ENCODE measurements at regions of chr12 and their contacts with region 1.

Region 1: GRCh38 chr12:124567661-124568373 is 405 bp upstream of the NCOR2 start:
- DNase-seq: peak; percentile 70 to 85 (median 82)
- ATAC-seq: peak; percentile 87
- H3K4me3 ChIP-seq: peak overlapping the region; percentile 72
- H3K4me3 Mint-ChIP-seq: peak overlapping the region; percentile 78 to 92 (median 86)
- H3K27ac ChIP-seq: peak overlapping the region; percentile 58
- H3K27ac Mint-ChIP-seq: peak overlapping the region; percentile 59 to 88 (median 81)
- H3K4me1 ChIP-seq: peaks cover 6 to 15% of the 10 kb centered on the region in 2 donors
- H3K4me1 Mint-ChIP-seq: peaks cover 0 to 47% (median 25%) of the 10 kb centered on the region in 7 donors
- H3K27me3 ChIP-seq: no peaks in the 10 kb centered on the region
- H3K27me3 Mint-ChIP-seq: no peaks in the 10 kb centered on the region

Region 2: DNA sequence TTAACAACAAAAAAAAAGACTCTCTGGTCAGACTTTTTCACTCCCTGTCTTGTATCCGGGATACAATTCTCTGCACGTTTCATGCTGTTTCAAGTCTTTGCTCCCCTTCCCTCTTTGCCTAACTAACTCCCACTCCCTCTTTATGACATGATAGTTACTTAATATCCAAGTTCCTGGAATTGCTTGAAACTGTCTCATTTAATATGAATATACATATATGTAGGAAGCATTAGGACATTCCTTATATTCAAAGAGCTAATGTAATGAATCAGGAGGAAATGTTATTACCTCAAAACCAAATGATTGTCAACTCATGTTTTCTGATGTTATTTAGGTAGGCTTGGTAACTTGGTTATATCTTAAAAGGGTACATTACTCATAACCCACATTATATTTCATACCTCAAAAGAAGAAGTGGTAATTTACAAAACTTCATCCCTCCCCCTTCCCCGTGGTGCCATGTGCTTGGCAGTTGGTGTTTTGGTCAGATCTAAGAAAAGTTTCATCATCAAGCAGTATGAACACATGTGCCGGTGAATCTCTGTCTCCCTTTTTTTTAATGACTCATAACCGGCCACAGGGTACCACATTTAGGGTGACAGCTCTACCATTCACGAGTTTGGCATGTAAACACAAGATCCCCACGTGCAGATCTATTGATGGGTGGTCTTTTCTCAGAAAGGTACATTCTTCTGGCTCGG is 1921.2 kb before region 1 on chr12:
- CTCF ChIA-PET with region 1: no interaction called
- POLR2A ChIA-PET with region 1: no interaction called
- intact Hi-C with region 1: no loop called
- DNase-seq: peak in 1 of 9 donors; percentile 41
- ATAC-seq: peak; percentile 89
- H3K4me3 ChIP-seq: no peak overlapping the region
- H3K4me3 Mint-ChIP-seq: peak overlapping the region in 2 of 10 donors; percentile 41 to 46
- H3K27ac ChIP-seq: no peak overlapping the region
- H3K27ac Mint-ChIP-seq: peak overlapping the region in 2 of 9 donors; percentile 0 to 24
- H3K4me1 ChIP-seq: no peaks in the 10 kb centered on the region
- H3K4me1 Mint-ChIP-seq: peaks cover 0 to 11% (median 8%) of the 10 kb centered on the region in 7 donors
- H3K27me3 ChIP-seq: no peaks in the 10 kb centered on the region
- H3K27me3 Mint-ChIP-seq: peaks cover 0 to 8% (median 7%) of the 10 kb centered on the region in 5 donors

Region 3: DNA sequence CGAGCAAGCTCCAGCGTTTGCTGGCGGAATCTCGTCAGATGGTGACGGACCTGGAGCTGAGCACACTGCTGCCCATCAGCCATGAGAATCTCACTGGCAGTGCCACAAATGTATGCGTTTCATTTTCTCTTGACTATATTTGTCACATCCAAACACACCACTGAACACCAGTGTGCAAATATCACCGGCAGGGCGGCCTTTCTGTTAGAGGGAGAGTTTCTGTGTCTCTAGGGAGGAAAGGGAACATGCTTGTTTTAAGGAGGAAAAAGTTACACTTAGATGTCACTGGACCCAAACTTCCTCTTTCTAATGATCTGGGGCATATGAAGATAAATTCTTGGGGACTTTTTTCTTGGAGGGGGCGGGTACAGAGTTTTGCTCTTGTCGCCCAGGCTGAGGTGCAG is 1754.5 kb before region 1 on chr12:
- CTCF ChIA-PET with region 1: no interaction called
- POLR2A ChIA-PET with region 1: no interaction called
- intact Hi-C with region 1: no loop called
- DNase-seq: no peak
- ATAC-seq: peak; percentile 45
- H3K4me3 ChIP-seq: no peak overlapping the region
- H3K4me3 Mint-ChIP-seq: no peak overlapping the region
- H3K27ac ChIP-seq: no peak overlapping the region
- H3K27ac Mint-ChIP-seq: peak overlapping the region in 1 of 9 donors; percentile 72
- H3K4me1 ChIP-seq: no peaks in the 10 kb centered on the region
- H3K4me1 Mint-ChIP-seq: no peaks in the 10 kb centered on the region
- H3K27me3 ChIP-seq: no peaks in the 10 kb centered on the region
- H3K27me3 Mint-ChIP-seq: peaks cover 0 to 2% (median 0%) of the 10 kb centered on the region in 5 donors

Region 4: DNA sequence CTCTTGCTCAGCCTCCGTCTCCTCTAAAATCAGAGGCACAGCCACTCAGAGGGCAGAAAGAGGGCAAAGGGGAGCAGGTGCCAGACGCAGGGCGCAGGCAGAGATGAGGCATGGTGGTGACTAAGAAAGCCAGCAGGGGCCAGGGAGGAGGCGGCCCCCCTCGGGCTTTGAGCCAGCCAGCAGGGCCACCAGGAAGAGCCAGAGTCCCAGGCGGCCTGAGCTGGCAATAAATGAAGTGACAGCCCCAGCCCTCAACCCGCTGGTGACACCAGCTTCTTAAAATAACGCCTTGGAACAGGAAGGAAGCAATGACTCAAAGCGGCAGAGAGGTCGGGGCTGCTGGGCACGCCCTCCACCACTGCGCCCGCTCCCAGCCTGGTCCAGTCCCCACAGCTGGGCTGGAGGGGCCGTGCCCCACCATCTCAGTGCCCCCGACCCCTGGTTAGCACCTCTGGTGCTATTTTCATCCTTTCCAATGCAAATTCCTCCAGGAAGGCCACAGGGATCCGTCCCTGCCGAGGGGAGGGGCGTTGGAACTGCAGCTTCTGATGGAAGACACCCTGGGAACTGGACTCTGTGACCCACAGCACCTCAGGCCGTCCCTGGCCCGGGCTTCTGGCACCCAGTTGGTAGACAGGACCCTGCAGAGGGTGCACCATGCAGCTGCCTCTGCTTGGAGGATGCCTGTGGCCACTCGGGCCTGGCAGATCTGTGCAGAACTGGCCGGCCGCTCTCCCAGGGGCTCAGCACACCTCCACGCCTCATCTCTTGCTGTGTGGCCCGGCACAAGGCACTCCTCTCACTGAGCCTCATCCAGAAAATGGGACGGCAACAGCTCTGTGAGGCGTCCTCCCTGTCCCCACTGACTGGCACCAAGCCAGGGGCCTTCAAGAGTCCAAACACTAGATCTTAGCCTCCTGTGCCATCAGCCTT is 114.1 kb before region 1 on chr12:
- CTCF ChIA-PET with region 1: no interaction called
- POLR2A ChIA-PET with region 1: no interaction called
- intact Hi-C with region 1: loop called (anchors 1 to 5 kb)
- DNase-seq: peak; percentile 47 to 82 (median 61)
- ATAC-seq: peak; percentile 78
- H3K4me3 ChIP-seq: peak overlapping the region; percentile 58
- H3K4me3 Mint-ChIP-seq: peak overlapping the region; percentile 42 to 77 (median 66)
- H3K27ac ChIP-seq: peak overlapping the region; percentile 48
- H3K27ac Mint-ChIP-seq: peak overlapping the region; percentile 10 to 87 (median 63)
- H3K4me1 ChIP-seq: peaks cover 51 to 74% of the 10 kb centered on the region in 2 donors
- H3K4me1 Mint-ChIP-seq: peaks cover 23 to 74% (median 55%) of the 10 kb centered on the region in 7 donors
- H3K27me3 ChIP-seq: no peaks in the 10 kb centered on the region
- H3K27me3 Mint-ChIP-seq: no peaks in the 10 kb centered on the region

Region 5: DNA sequence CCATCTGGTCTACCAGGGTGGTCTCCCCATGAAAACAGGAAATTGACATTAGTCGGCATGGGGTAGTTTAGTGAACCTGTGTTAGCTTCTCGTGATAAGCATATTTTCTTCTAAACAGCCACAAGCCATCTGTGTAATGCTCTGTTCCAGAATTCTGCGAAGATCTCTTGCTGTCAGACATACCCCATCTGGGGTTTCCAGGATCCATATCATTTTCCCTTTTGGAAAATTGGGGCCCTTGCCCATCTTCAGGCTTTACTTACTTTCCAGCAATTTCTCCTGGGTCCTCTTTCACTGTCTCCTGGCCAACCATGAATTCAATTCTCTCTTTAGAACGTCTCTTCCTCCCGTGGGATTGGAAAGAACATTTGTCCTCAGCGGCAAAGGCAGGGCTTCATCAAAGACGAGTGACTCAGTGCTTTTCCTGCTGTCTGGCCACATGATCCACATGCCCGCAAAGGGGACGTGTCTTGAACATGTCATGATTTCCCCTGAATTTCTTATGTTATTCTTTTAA is 21.0 kb after region 1 on chr12:
- CTCF ChIA-PET with region 1: no interaction called
- POLR2A ChIA-PET with region 1: no interaction called
- intact Hi-C with region 1: loop called in 1 of 2 experiments (anchors 2 kb)
- DNase-seq: no peak
- ATAC-seq: peak; percentile 60
- H3K4me3 ChIP-seq: no peak overlapping the region
- H3K4me3 Mint-ChIP-seq: no peak overlapping the region
- H3K27ac ChIP-seq: no peak overlapping the region
- H3K27ac Mint-ChIP-seq: peak overlapping the region in 1 of 9 donors; percentile 28
- H3K4me1 ChIP-seq: peaks cover 0 to 8% of the 10 kb centered on the region in 2 donors
- H3K4me1 Mint-ChIP-seq: peaks cover 10 to 14% (median 13%) of the 10 kb centered on the region in 7 donors
- H3K27me3 ChIP-seq: no peaks in the 10 kb centered on the region
- H3K27me3 Mint-ChIP-seq: peaks cover 0 to 14% (median 3%) of the 10 kb centered on the region in 5 donors

Region 6: GRCh38 chr12:124713436-124714082 is 145.7 kb after region 1 on chr12:
- CTCF ChIA-PET with region 1: no interaction called
- POLR2A ChIA-PET with region 1: no interaction called
- intact Hi-C with region 1: loop called (anchors 1 to 2 kb)
- DNase-seq: peak in 8 of 9 donors; percentile 46 to 74 (median 63)
- ATAC-seq: peak; percentile 77
- H3K4me3 ChIP-seq: peak overlapping the region; percentile 56
- H3K4me3 Mint-ChIP-seq: peak overlapping the region; percentile 72 to 87 (median 82)
- H3K27ac ChIP-seq: no peak overlapping the region
- H3K27ac Mint-ChIP-seq: peak overlapping the region; percentile 72 to 93 (median 88)
- H3K4me1 ChIP-seq: peaks cover 12 to 14% of the 10 kb centered on the region in 2 donors
- H3K4me1 Mint-ChIP-seq: peaks cover 16 to 26% (median 19%) of the 10 kb centered on the region in 7 donors
- H3K27me3 ChIP-seq: no peaks in the 10 kb centered on the region
- H3K27me3 Mint-ChIP-seq: peaks cover 0 to 15% (median 0%) of the 10 kb centered on the region in 5 donors

Region 7: DNA sequence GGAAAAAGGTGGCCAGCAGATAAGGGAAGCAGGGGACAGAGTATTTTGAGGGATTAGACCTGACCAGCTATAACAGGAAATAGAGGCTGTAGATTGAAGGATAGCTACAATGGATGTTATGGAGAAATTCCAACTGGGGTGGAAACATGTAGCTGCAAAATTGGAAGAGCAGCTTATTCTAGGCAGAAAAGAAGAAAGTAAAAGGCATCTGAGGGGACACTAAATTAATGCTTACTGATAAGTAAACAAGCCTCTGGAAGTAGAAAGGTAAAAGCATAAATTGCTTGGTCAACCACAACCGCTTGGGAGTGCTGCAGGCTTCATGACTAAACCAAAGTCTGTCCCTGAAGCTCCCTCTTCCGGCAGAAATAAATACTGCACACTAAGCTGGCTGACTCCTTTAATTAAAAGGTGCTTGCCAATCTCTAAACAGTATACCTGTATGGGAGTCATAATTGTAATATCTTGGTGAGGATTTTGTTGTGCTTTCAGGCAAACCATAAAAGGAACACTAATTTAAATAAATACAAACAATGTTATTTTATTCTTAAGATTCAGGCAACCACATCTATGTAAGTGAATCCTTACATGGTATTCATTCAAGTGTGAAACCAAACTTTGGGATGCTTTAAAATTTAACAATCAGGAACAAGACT is 338.9 kb after region 1 on chr12:
- CTCF ChIA-PET with region 1: no interaction called
- POLR2A ChIA-PET with region 1: no interaction called
- intact Hi-C with region 1: loop called in 1 of 2 experiments (anchors 2 kb)
- DNase-seq: peak; percentile 49 to 92 (median 89)
- ATAC-seq: peak; percentile 90
- H3K4me3 ChIP-seq: no peak overlapping the region
- H3K4me3 Mint-ChIP-seq: peak overlapping the region in 1 of 10 donors; percentile 4
- H3K27ac ChIP-seq: no peak overlapping the region
- H3K27ac Mint-ChIP-seq: peak overlapping the region in 8 of 9 donors; percentile 1 to 67 (median 36)
- H3K4me1 ChIP-seq: peaks cover 4 to 10% of the 10 kb centered on the region in 2 donors
- H3K4me1 Mint-ChIP-seq: peaks cover 21 to 33% (median 27%) of the 10 kb centered on the region in 7 donors
- H3K27me3 ChIP-seq: no peaks in the 10 kb centered on the region
- H3K27me3 Mint-ChIP-seq: no peaks in the 10 kb centered on the region

Measured in naive thymus-derived CD4-positive, alpha-beta T cell (primary cell).